Tibial artery (tissue), 4 donors: ENCODE measurements at regions of chr22 and their contacts with region 1.

Region 1: GRCh38 chr22:30634471-30635233 is 929 bp upstream of the SLC35E4 start:
- DNase-seq: peak; percentile 82 to 93
- H3K4me3 ChIP-seq: peak overlapping the region; percentile 77 to 82
- H3K27ac ChIP-seq: peak overlapping the region; percentile 85 to 93
- H3K4me1 ChIP-seq: peaks cover 9 to 40% (median 26%) of the 10 kb centered on the region in 4 donors
- H3K27me3 ChIP-seq: no peaks in the 10 kb centered on the region
- CTCF ChIP-seq: peak; percentile 97 to 98

Region 2: GRCh38 chr22:30754971-30755756 is 120.5 kb after region 1 on chr22:
- intact Hi-C with region 1: loop called (anchors 5 kb)
- DNase-seq: peak in 1 of 2 donors; percentile 29
- H3K4me3 ChIP-seq: no peak overlapping the region
- H3K27ac ChIP-seq: no peak overlapping the region
- H3K4me1 ChIP-seq: peaks cover 0 to 7% (median 2%) of the 10 kb centered on the region in 4 donors
- H3K27me3 ChIP-seq: no peaks in the 10 kb centered on the region
- CTCF ChIP-seq: peak; percentile 37 to 59

Region 3: DNA sequence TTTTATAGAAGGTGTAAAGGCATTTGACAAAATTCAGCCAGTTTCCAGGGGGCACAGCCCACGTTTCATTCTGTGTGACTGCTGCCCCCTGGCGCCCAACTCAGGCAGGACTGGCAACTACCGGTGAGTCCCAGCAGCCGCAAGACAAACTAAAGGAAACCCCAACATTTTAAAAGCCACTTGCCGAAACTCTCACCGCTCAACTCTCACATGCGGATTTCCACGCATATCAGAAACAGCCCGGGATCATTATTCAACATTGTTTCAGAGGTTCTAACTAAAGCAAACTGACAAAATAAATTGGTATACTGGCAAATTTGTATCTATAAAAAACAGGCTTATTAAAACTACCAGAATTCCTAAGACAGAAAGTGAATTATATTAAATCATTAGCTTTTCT is 285.8 kb after region 1 on chr22:
- intact Hi-C with region 1: loop called (anchors 5 kb)
- DNase-seq: peak; percentile 79
- H3K4me3 ChIP-seq: no peak overlapping the region
- H3K27ac ChIP-seq: no peak overlapping the region
- H3K4me1 ChIP-seq: peaks cover 0 to 12% (median 0%) of the 10 kb centered on the region in 4 donors
- H3K27me3 ChIP-seq: no peaks in the 10 kb centered on the region
- CTCF ChIP-seq: peak; percentile 86 to 87